Activated CD4-positive, alpha-beta T cell treated with anti-CD3 and anti-CD28 coated beads, Interleukin-2, amount 10 ng/mL, durations not matched to agents 24 days and 14 days (primary cell): ENCODE measurements at regions of chr1 and their contacts with region 1.

Region 1: DNA sequence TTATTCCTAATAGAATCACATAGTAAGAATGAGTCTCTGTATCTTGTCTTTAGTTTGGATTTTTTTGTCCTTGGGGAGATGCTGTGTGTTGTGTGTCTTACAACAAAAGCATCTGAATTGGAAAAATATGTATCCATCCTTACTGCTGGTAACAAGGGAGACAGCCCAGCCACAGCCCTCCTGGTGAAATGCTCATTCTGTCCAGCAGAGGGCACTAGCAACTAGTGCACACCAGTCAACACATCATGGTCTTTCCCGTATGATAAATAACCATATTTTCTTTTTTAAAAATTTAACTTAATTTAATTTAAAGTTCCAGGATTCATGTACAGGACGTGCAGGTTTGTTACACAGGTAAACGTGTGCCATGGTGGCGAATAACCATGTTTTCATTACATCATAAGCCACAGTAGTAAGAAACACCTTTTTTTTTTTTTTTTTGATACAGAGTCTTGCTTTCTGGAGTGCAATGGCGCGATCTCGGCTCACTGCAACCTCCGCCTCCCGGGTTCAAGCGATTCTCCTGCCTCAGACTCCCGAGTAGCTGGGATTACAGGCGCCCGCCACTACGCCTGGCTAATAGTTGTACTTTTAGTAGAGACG is 245.1 kb downstream of the PTBP2 start:
- DNase-seq: peak; percentile 90
- H3K4me3 Mint-ChIP-seq: no peak overlapping the region
- H3K27ac Mint-ChIP-seq: no peak overlapping the region
- H3K4me1 Mint-ChIP-seq: no peaks in the 10 kb centered on the region
- H3K27me3 Mint-ChIP-seq: peaks cover 3% of the 10 kb centered on the region

Region 2: DNA sequence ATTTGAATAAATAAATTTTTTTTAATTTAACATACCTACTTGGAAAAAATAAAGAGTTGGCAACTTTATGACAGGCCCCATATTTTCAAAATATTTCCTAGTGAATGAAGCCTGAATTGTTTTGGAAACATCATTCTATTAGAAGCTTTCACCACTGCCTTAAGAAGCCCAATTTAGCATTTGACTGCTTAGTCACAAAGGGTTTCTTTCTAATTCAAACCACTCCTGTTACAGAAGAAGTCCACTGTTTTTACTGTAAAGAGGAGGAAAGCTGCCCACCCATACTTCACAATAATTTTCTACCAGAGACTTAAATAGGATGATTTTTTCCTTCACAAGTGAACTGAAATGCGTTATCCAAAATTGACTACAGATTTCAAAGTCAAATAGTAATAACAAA is 779.6 kb before region 1 on chr1:
- intact Hi-C with region 1: no loop called
- DNase-seq: no peak
- H3K4me3 Mint-ChIP-seq: no peak overlapping the region
- H3K27ac Mint-ChIP-seq: no peak overlapping the region
- H3K4me1 Mint-ChIP-seq: no peaks in the 10 kb centered on the region
- H3K27me3 Mint-ChIP-seq: no peaks in the 10 kb centered on the region

Region 3: GRCh38 chr1:98468111-98468717 is 1501.6 kb after region 1 on chr1:
- intact Hi-C with region 1: loop called (anchors 5 kb)
- DNase-seq: peak; percentile 62
- H3K4me3 Mint-ChIP-seq: no peak overlapping the region
- H3K27ac Mint-ChIP-seq: no peak overlapping the region
- H3K4me1 Mint-ChIP-seq: no peaks in the 10 kb centered on the region
- H3K27me3 Mint-ChIP-seq: peaks cover 8% of the 10 kb centered on the region